Colonic mucosa (tissue), 4 donors: ENCODE measurements at regions of chr3 and their contacts with region 1.

Region 1: GRCh38 chr3:32018757-32019564 is 37.4 kb downstream of the ZNF860 start:
- DNase-seq: no peak
- H3K4me3 ChIP-seq: no peak overlapping the region
- H3K27ac ChIP-seq: no peak overlapping the region
- H3K4me1 ChIP-seq: peaks cover 6% of the 10 kb centered on the region
- H3K27me3 ChIP-seq: no peaks in the 10 kb centered on the region
- CTCF ChIP-seq: peak; percentile 74

Region 2: DNA sequence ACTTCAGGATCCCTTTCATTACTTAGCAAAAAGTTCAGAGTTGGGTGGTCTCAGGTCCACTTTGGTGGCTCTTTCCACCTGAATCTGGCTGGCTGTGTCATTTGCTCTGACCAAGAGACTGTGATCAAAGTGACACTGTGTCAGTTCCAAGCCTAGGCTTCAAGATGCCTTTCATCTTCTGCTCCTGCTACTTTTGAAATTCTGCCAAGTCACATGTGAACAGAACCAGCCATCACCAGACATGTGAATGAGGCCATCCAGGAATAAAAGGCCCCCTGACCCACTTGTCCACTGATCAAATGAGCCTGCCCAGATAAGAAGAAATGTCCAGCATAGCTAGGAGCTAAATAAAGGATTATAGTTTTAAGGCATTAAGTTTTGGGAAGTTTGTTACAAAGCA is 170.1 kb before region 1 on chr3:
- intact Hi-C with region 1: no loop called
- DNase-seq: no peak
- H3K4me3 ChIP-seq: no peak overlapping the region
- H3K27ac ChIP-seq: no peak overlapping the region
- H3K4me1 ChIP-seq: no peaks in the 10 kb centered on the region
- H3K27me3 ChIP-seq: no peaks in the 10 kb centered on the region
- CTCF ChIP-seq: no peak

Region 3: GRCh38 chr3:31908391-31909097 is 110.4 kb before region 1 on chr3:
- intact Hi-C with region 1: no loop called
- DNase-seq: no peak
- H3K4me3 ChIP-seq: no peak overlapping the region
- H3K27ac ChIP-seq: no peak overlapping the region
- H3K4me1 ChIP-seq: no peaks in the 10 kb centered on the region
- H3K27me3 ChIP-seq: no peaks in the 10 kb centered on the region
- CTCF ChIP-seq: no peak

Region 4: GRCh38 chr3:32146746-32147211 is 127.8 kb after region 1 on chr3:
- intact Hi-C with region 1: loop called (anchors 1 kb)
- DNase-seq: no peak
- H3K4me3 ChIP-seq: no peak overlapping the region
- H3K27ac ChIP-seq: no peak overlapping the region
- H3K4me1 ChIP-seq: no peaks in the 10 kb centered on the region
- H3K27me3 ChIP-seq: no peaks in the 10 kb centered on the region
- CTCF ChIP-seq: no peak

Region 5: DNA sequence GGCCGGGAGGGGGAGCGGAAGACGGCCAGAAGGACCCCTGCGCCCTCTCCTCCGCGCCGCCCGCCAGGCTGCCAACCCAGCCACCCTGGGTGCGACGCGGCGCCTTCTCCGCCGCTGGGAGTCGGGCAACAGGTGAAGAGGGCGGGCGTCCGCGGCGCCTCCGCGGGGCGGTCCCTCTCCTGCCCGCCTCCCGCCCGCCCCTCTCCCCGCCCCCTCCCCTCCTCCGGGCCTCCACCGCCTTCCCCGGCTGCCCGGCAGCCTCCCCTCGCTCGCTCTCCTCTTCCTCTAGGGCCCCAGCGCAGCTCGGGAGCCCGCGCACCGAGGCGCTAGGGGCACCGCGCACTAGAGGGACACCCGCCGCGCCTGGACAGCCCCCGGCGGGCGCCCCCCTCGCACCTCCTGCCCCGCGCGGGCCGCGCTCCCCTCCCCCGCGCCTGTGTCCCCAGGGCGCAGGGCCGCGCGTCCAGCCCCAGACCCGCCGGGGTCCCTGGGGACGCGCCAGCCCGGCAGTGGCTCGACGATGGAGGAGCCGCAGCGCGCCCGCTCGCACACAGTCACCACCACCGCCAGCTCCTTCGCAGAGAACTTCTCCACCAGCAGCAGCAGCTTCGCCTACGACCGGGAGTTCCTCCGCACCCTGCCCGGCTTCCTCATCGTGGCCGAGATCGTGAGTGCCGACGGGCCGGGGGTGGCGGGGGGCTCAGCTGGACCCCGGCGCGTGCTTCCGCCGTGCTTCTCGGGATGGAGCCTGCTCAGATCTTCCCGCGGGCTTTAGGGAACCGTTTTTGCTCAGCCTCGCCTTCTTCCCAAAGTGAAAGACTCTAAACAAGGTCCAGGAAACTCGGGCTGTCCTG is 219.7 kb after region 1 on chr3 and contains the start of gene CMTM8:
- intact Hi-C with region 1: no loop called
- DNase-seq: peak; percentile 84
- H3K4me3 ChIP-seq: peak within 1 kb of the TSS; percentile 75
- H3K27ac ChIP-seq: peak within 1 kb of the TSS; percentile 66
- H3K4me1 ChIP-seq: peaks cover 7% of the 10 kb centered on the region
- H3K27me3 ChIP-seq: no peaks in the 10 kb centered on the region
- CTCF ChIP-seq: no peak
- total RNA-seq, gene CMTM8: 11.7 to 14.2 TPM